ENCODE measurements at regions of chr2 and their contacts with region 1.

Region 1: GRCh38 chr2:27703638-27704341 is 40.1 kb downstream of the SLC4A1AP start:
- DNase-seq: peak; percentile 91
- ATAC-seq: peak; percentile 91
- H3K4me3 Mint-ChIP-seq: no peak overlapping the region
- H3K27ac Mint-ChIP-seq: peak overlapping the region; percentile 72
- H3K4me1 Mint-ChIP-seq: peaks cover 29% of the 10 kb centered on the region
- H3K27me3 Mint-ChIP-seq: no peaks in the 10 kb centered on the region

Region 2: GRCh38 chr2:27715318-27716210 is 11.8 kb after region 1 on chr2:
- CTCF ChIA-PET with region 1: interaction called, 25 read pairs
- DNase-seq: peak; percentile 48
- ATAC-seq: peak; percentile 58
- H3K4me3 Mint-ChIP-seq: no peak overlapping the region
- H3K27ac Mint-ChIP-seq: no peak overlapping the region
- H3K4me1 Mint-ChIP-seq: peaks cover 31% of the 10 kb centered on the region
- H3K27me3 Mint-ChIP-seq: peaks cover 18% of the 10 kb centered on the region

Region 3: DNA sequence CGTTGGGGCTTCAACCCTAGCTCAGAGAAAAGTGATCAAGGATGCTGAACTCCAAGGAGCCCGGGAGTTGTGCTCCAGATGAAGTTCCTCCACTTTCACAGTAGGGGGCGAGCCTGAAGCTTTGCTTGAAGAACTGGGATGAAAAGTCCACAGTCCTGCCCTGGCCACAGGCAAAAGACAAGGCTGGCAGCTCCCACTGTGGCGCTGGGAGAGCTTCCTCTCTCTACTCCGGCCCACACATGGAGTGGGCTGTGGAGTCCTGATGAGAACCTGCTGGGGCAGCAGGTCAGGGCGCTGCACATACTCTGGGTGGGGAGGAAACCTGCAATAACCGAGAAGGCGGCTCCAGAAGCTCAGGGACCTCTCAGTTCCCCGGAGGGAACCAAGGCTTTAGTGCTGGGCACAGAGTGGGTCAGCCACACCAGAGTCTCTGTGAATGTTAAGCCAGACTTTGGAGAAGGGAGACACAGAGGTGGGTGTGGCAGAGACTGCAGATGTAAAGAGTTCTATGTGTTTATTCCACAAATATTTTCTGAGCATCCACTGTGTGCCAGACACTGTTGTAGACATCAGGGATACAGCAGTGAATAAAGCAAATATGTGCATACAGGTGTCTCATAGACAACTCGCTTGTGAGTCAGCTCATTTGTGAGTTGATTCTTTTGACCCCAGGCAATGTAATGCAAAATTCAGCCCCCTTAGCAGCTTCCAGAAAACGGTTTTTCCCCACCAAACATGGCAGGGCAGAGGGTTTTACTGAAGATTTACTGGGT is 19.8 kb after region 1 on chr2:
- CTCF ChIA-PET with region 1: interaction called, 14 read pairs
- DNase-seq: no peak
- ATAC-seq: no peak
- H3K4me3 Mint-ChIP-seq: no peak overlapping the region
- H3K27ac Mint-ChIP-seq: no peak overlapping the region
- H3K4me1 Mint-ChIP-seq: peaks cover 28% of the 10 kb centered on the region
- H3K27me3 Mint-ChIP-seq: no peaks in the 10 kb centered on the region

Region 4: GRCh38 chr2:27832396-27832795 is 128.6 kb after region 1 on chr2:
- CTCF ChIA-PET with region 1: no interaction called
- DNase-seq: no peak
- ATAC-seq: no peak
- H3K4me3 Mint-ChIP-seq: no peak overlapping the region
- H3K27ac Mint-ChIP-seq: no peak overlapping the region
- H3K4me1 Mint-ChIP-seq: no peaks in the 10 kb centered on the region
- H3K27me3 Mint-ChIP-seq: no peaks in the 10 kb centered on the region

Region 5: GRCh38 chr2:28419443-28420270 is 715.9 kb after region 1 on chr2:
- CTCF ChIA-PET with region 1: interaction called, 12 read pairs
- DNase-seq: no peak
- ATAC-seq: no peak
- H3K4me3 Mint-ChIP-seq: no peak overlapping the region
- H3K27ac Mint-ChIP-seq: peak overlapping the region; percentile 58
- H3K4me1 Mint-ChIP-seq: peaks cover 46% of the 10 kb centered on the region
- H3K27me3 Mint-ChIP-seq: no peaks in the 10 kb centered on the region

Region 6: GRCh38 chr2:28452534-28453081 is 748.8 kb after region 1 on chr2:
- CTCF ChIA-PET with region 1: interaction called, 21 read pairs
- DNase-seq: peak; percentile 89
- ATAC-seq: peak; percentile 80
- H3K4me3 Mint-ChIP-seq: no peak overlapping the region
- H3K27ac Mint-ChIP-seq: peak overlapping the region; percentile 41
- H3K4me1 Mint-ChIP-seq: peaks cover 53% of the 10 kb centered on the region
- H3K27me3 Mint-ChIP-seq: no peaks in the 10 kb centered on the region

Measured in activated CD8-positive, alpha-beta memory T cell treated with anti-CD3 and anti-CD28 coated beads, Interleukin-2, amount 10 ng/mL, durations not matched to agents 7 days and 5 days (primary cell).